Caco-2 (cell line): ENCODE measurements at regions of chr10 and their contacts with region 1.

Region 1: GRCh38 chr10:66180581-66181318 is 745.1 kb upstream of the LRRTM3 start:
- DNase-seq: peak in 1 of 2 experiments; percentile 73
- H3K4me3 ChIP-seq: no peak overlapping the region
- H3K4me3 Mint-ChIP-seq: no peak overlapping the region
- H3K27ac Mint-ChIP-seq: no peak overlapping the region
- H3K4me1 ChIP-seq: no peaks in the 10 kb centered on the region
- H3K4me1 Mint-ChIP-seq: no peaks in the 10 kb centered on the region
- H3K27me3 ChIP-seq: no peaks in the 10 kb centered on the region
- H3K27me3 Mint-ChIP-seq: no peaks in the 10 kb centered on the region
- CTCF ChIP-seq: peak; percentile 73 to 89

Region 2: GRCh38 chr10:64977915-64978314 is 1202.8 kb before region 1 on chr10:
- CTCF ChIA-PET with region 1: no interaction called
- POLR2A ChIA-PET with region 1: no interaction called
- intact Hi-C with region 1: loop called (anchors 1 kb)
- DNase-seq: no peak
- H3K4me3 ChIP-seq: no peak overlapping the region
- H3K4me3 Mint-ChIP-seq: no peak overlapping the region
- H3K27ac Mint-ChIP-seq: no peak overlapping the region
- H3K4me1 ChIP-seq: no peaks in the 10 kb centered on the region
- H3K4me1 Mint-ChIP-seq: no peaks in the 10 kb centered on the region
- H3K27me3 ChIP-seq: no peaks in the 10 kb centered on the region
- H3K27me3 Mint-ChIP-seq: no peaks in the 10 kb centered on the region
- CTCF ChIP-seq: peak in 1 of 2 experiments; percentile 25

Region 3: GRCh38 chr10:65570143-65571010 is 610.4 kb before region 1 on chr10:
- CTCF ChIA-PET with region 1: no interaction called
- POLR2A ChIA-PET with region 1: no interaction called
- intact Hi-C with region 1: loop called (anchors 10 kb)
- DNase-seq: peak; percentile 87 to 90
- H3K4me3 ChIP-seq: peak overlapping the region; percentile 49
- H3K4me3 Mint-ChIP-seq: peak overlapping the region; percentile 95
- H3K27ac Mint-ChIP-seq: peak overlapping the region; percentile 95
- H3K4me1 ChIP-seq: peaks cover 8% of the 10 kb centered on the region; the same call in 1 of the 2 replicates
- H3K4me1 Mint-ChIP-seq: peaks cover 8% of the 10 kb centered on the region
- H3K27me3 ChIP-seq: no peaks in the 10 kb centered on the region
- H3K27me3 Mint-ChIP-seq: peaks cover 3% of the 10 kb centered on the region
- CTCF ChIP-seq: no peak

Region 4: GRCh38 chr10:66085906-66086305 is 94.8 kb before region 1 on chr10:
- CTCF ChIA-PET with region 1: no interaction called
- POLR2A ChIA-PET with region 1: no interaction called
- intact Hi-C with region 1: loop called (anchors 5 kb)
- DNase-seq: no peak
- H3K4me3 ChIP-seq: no peak overlapping the region
- H3K4me3 Mint-ChIP-seq: no peak overlapping the region
- H3K27ac Mint-ChIP-seq: no peak overlapping the region
- H3K4me1 ChIP-seq: no peaks in the 10 kb centered on the region
- H3K4me1 Mint-ChIP-seq: no peaks in the 10 kb centered on the region
- H3K27me3 ChIP-seq: no peaks in the 10 kb centered on the region
- H3K27me3 Mint-ChIP-seq: peaks cover 4% of the 10 kb centered on the region
- CTCF ChIP-seq: no peak